Activated naive CD4-positive, alpha-beta T cell treated with anti-CD3 and anti-CD28 coated beads for 36 hours (primary cell): ENCODE measurements at regions of chr10 and their contacts with region 1.

Region 1: GRCh38 chr10:62205750-62206399 is 62.8 kb downstream of the RTKN2 start:
- DNase-seq: no peak
- H3K4me3 Mint-ChIP-seq: no peak overlapping the region
- H3K27ac Mint-ChIP-seq: no peak overlapping the region
- H3K4me1 Mint-ChIP-seq: peaks cover 8% of the 10 kb centered on the region
- H3K27me3 Mint-ChIP-seq: no peaks in the 10 kb centered on the region

Region 2: GRCh38 chr10:62217683-62218082 is 11.8 kb after region 1 on chr10:
- CTCF ChIA-PET with region 1: interaction called, 3 read pairs
- intact Hi-C with region 1: loop called (anchors 1 kb)
- DNase-seq: no peak
- H3K4me3 Mint-ChIP-seq: no peak overlapping the region
- H3K27ac Mint-ChIP-seq: no peak overlapping the region
- H3K4me1 Mint-ChIP-seq: no peaks in the 10 kb centered on the region
- H3K27me3 Mint-ChIP-seq: no peaks in the 10 kb centered on the region